CD8-positive, alpha-beta T cell (primary cell): ENCODE measurements at regions of chr3 and their contacts with region 1.

Region 1: GRCh38 chr3:50272911-50273693 is 4.2 kb downstream of the SEMA3B start:
- DNase-seq: peak; percentile 71 to 93 (median 88)
- ATAC-seq: peak; percentile 89
- H3K4me3 ChIP-seq: peak overlapping the region; percentile 8 to 17
- H3K4me3 Mint-ChIP-seq: peak overlapping the region; percentile 68
- H3K27ac ChIP-seq: no peak overlapping the region
- H3K27ac Mint-ChIP-seq: no peak overlapping the region
- H3K4me1 ChIP-seq: peaks cover 31% of the 10 kb centered on the region
- H3K4me1 Mint-ChIP-seq: peaks cover 25% of the 10 kb centered on the region
- H3K27me3 ChIP-seq: peaks cover 24 to 31% of the 10 kb centered on the region in 2 experiments
- H3K27me3 Mint-ChIP-seq: peaks cover 34% of the 10 kb centered on the region
- CTCF ChIP-seq: peak; percentile 93

Region 2: GRCh38 chr3:50121416-50122032 is 151.6 kb before region 1 on chr3:
- CTCF ChIA-PET with region 1: interaction called, 4 read pairs
- POLR2A ChIA-PET with region 1: no interaction called
- intact Hi-C with region 1: loop called in 1 of 2 experiments (anchors 1 kb)
- DNase-seq: peak; percentile 50 to 84 (median 75)
- ATAC-seq: peak; percentile 88
- H3K4me3 ChIP-seq: no peak overlapping the region
- H3K4me3 Mint-ChIP-seq: no peak overlapping the region
- H3K27ac ChIP-seq: no peak overlapping the region
- H3K27ac Mint-ChIP-seq: no peak overlapping the region
- H3K4me1 ChIP-seq: no peaks in the 10 kb centered on the region
- H3K4me1 Mint-ChIP-seq: no peaks in the 10 kb centered on the region
- H3K27me3 ChIP-seq: no peaks in the 10 kb centered on the region
- H3K27me3 Mint-ChIP-seq: no peaks in the 10 kb centered on the region
- CTCF ChIP-seq: peak; percentile 86

Region 3: GRCh38 chr3:50245831-50246516 is 27.1 kb before region 1 on chr3:
- CTCF ChIA-PET with region 1: interaction called, 142 read pairs
- POLR2A ChIA-PET with region 1: interaction called, 3 read pairs
- intact Hi-C with region 1: loop called (anchors 1 kb)
- DNase-seq: peak; percentile 90 to 99 (median 95)
- ATAC-seq: peak; percentile 81
- H3K4me3 ChIP-seq: peak overlapping the region; percentile 40 to 55
- H3K4me3 Mint-ChIP-seq: peak overlapping the region; percentile 75
- H3K27ac ChIP-seq: peak overlapping the region; percentile 32 to 88
- H3K27ac Mint-ChIP-seq: peak overlapping the region; percentile 94
- H3K4me1 ChIP-seq: peaks cover 87% of the 10 kb centered on the region
- H3K4me1 Mint-ChIP-seq: peaks cover 76% of the 10 kb centered on the region
- H3K27me3 ChIP-seq: no peaks in the 10 kb centered on the region
- H3K27me3 Mint-ChIP-seq: no peaks in the 10 kb centered on the region
- CTCF ChIP-seq: peak; percentile 80

Region 4: DNA sequence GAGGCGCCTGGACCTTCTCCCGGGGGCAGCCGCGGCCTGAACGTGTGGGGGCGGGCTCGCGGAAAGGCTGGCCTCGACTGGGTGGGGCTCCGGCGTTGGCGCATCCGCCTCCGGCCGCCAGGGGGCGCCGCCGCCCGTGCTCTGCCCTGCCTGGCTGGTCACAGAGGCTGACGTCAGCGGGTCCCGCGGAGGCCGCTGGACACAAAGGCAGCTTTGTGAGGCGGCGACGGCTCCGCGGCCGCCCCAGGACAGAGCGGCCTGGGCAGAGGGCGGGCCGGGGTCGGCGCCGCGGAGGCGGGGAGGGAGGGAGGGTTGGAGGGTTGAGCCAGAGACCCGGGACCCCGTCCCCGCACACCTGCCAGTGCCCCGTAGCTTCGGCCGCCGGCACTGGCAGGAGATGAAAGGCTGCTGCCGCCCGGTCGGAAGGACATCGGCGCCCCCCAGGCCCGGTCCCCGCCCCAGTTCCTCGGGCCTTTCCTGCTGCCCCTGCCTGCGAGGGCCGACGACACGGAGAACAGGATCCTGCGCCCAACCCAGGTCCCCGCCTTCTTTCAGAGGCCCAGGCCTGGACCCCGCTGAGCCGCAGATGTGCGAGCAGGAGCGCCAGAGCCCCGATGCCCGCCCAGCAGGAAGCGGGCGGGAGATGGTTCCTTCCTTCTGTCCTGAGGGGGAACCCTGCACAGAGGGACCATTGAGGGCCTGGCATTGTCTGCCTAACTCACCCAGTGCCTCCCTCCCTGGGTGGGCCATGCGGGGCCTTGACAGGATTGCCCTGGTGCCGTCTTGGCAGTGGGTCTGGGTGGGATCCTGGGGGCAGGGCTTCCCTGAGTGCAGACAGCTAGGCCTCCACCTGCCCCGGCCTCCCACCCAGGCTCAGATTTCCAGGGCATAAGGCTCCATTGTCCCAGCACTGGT is 12.8 kb before region 1 on chr3:
- CTCF ChIA-PET with region 1: interaction called, 41 read pairs
- POLR2A ChIA-PET with region 1: interaction called, 3 read pairs
- intact Hi-C with region 1: loop called (anchors 1 kb)
- DNase-seq: peak; percentile 55 to 90 (median 81)
- ATAC-seq: peak; percentile 92
- H3K4me3 ChIP-seq: peak overlapping the region; percentile 49 to 53
- H3K4me3 Mint-ChIP-seq: peak overlapping the region; percentile 75
- H3K27ac ChIP-seq: peak overlapping the region; percentile 62 to 68
- H3K27ac Mint-ChIP-seq: peak overlapping the region; percentile 66
- H3K4me1 ChIP-seq: peaks cover 6% of the 10 kb centered on the region
- H3K4me1 Mint-ChIP-seq: peaks cover 7% of the 10 kb centered on the region
- H3K27me3 ChIP-seq: no peaks in the 10 kb centered on the region
- H3K27me3 Mint-ChIP-seq: no peaks in the 10 kb centered on the region
- CTCF ChIP-seq: peak; percentile 92

Region 5: DNA sequence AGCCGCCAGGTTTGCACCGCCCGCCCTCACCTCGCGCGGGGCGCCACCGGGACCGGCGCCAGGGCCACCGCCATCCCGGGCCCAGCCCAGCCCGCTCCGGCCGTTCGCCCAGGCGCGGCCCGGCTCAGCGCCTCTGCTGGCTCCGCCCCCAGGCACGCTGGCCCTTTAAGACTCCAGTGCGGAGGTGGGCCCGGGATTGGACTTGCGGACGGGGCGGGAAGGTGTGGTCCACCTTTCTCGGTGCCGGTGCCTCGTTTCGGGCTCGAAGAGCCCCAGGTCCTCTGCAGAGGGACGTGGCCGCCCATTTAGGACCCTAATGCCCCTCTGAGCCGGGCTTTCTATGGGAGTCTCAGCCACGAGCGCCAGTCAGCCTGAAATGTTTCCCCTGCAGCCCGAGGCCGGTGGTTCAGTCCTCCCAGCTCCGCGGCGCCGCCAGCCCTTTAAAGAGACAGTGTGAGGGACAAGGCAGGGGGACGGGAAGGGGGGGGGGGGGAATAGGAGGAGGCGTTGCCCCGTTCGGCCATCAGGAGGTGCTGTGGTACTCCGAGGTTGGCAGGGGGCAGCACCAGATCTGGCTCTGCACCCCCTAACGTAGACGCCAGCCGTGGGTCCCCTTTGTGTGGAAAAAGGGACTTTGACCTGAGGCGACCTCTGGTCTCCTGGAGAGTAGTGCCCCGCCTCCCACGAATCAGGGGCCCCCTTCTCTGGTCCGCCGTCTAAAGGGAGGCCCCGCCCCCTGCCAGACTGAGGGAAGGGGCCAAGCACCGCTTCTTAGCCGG is 48.4 kb after region 1 on chr3:
- CTCF ChIA-PET with region 1: interaction called, 6 read pairs
- POLR2A ChIA-PET with region 1: no interaction called
- intact Hi-C with region 1: loop called (anchors 1 kb)
- DNase-seq: peak; percentile 65 to 89 (median 82)
- ATAC-seq: peak; percentile 69
- H3K4me3 ChIP-seq: peak overlapping the region; percentile 71 to 96
- H3K4me3 Mint-ChIP-seq: peak overlapping the region; percentile 85
- H3K27ac ChIP-seq: peak overlapping the region; percentile 77 to 94
- H3K27ac Mint-ChIP-seq: peak overlapping the region; percentile 92
- H3K4me1 ChIP-seq: peaks cover 30% of the 10 kb centered on the region
- H3K4me1 Mint-ChIP-seq: peaks cover 41% of the 10 kb centered on the region
- H3K27me3 ChIP-seq: no peaks in the 10 kb centered on the region
- H3K27me3 Mint-ChIP-seq: no peaks in the 10 kb centered on the region
- CTCF ChIP-seq: peak; percentile 47